ENCODE measurements at regions of chr3 and their contacts with region 1.

Region 1: DNA sequence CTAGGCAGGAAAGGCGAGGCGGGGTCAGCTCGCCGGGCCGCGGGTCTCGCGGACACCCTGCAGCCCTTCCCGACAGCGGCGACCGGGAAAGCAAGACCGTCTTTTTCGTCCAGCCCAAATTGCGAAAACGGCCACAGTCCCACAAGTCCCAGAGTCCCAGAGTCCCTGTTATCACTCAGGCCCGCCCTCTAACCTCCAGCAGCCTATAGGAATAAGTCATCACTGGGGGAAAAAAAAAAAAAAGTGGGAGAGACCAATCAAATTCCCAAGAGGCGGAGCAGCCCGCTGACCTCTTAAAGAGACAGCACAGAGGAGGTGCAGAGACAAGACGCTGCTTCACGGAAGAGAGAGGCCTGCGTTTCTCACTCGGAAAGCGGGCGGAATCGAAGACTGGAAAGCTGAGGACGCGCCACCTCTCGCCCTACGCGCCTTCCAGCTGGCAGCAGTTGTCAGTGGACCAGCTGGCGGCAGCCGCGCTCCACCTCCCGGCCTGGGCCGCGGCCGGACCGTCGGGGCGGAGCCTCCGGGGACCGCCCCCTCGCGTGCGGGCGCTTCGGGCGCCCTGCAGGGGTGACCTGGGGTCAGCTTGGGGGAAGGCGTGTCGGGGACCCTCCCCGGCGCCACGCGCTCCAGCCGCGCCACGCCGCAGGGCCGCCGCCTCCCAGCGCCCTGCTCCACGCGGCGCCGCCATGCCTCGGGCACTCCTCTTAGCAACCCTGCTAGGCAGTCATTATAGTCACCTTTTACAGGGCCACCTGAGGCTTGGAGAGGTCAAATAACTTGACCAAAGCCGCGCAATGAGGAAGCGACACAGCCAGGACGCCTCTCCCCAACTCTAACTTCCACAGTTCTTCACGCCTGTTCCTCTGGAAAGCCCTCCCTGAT is at the start of gene TPRA1:
- DNase-seq: peak; percentile 96 to 98 (median 98)
- H3K4me3 ChIP-seq: peak within 1 kb of the TSS; percentile 71 to 94 (median 85)
- H3K27ac ChIP-seq: peak within 1 kb of the TSS; percentile 85 to 94
- H3K4me1 ChIP-seq: peaks cover 0 to 32% (median 27%) of the 10 kb centered on the region in 4 experiments
- H3K27me3 ChIP-seq: no peaks in the 10 kb centered on the region

Region 2: GRCh38 chr3:127216415-127217261 is 374.2 kb before region 1 on chr3:
- CTCF ChIA-PET with region 1: no interaction called
- POLR2A ChIA-PET with region 1: no interaction called
- DNase-seq: no peak
- H3K4me3 ChIP-seq: no peak overlapping the region
- H3K27ac ChIP-seq: no peak overlapping the region
- H3K4me1 ChIP-seq: peaks cover 0 to 4% (median 0%) of the 10 kb centered on the region in 4 experiments
- H3K27me3 ChIP-seq: peaks cover 0 to 42% (median 10%) of the 10 kb centered on the region in 5 experiments

Region 3: DNA sequence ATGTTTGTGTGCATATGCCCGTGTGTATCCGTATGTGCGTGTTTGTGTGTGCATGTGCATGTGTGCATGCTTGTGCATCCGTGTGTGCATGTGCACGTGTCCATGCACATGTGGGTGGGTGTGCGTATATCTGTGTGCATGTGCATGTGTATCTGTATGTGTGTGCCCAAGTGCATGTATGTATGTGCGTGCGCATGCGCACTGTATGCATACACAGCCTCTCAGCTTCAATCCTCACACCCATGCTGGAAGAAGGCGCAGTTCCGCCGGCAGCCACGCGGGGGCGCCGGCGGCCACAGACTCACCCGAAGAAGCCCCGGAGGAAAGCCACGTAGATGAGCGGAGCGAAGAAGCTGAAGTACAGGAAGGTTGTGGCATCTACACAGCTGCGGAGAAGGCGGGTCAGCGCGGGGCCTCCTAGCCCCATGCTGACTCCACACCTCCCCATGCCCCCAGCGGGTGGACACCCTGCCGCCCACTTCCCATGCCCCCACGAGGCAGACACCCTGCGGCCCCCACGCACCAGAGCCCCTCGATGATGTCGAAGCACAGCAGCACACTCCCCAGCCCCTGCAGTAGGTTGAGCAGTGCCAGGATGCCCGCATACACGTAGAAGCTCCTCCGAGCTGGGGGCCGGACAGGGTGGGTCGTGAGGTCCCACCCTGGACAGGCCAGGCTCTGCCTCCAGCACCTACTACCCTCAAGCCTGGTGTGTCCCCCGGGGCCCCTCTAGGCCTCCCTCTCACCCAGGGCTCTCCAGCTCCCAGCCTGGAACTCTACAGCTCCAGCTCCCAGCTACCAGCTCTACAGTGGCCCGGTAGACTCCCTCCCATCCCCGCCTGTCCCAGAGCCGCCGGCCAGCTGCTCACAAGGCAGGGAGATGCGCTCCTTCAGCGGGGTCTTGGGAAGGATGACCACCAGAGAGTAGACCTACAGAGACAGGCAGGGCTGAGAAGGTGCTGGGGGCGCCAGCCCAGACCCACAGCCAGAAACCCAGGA is 15.7 kb before region 1 on chr3:
- CTCF ChIA-PET with region 1: interaction called, 42 read pairs
- POLR2A ChIA-PET with region 1: no interaction called
- DNase-seq: peak; percentile 85 to 94 (median 91)
- H3K4me3 ChIP-seq: peak overlapping the region in 1 of 7 experiments; percentile 8
- H3K27ac ChIP-seq: no peak overlapping the region
- H3K4me1 ChIP-seq: peaks cover 0 to 9% (median 6%) of the 10 kb centered on the region in 4 experiments
- H3K27me3 ChIP-seq: no peaks in the 10 kb centered on the region

Region 4: GRCh38 chr3:127697551-127698240 is 106.9 kb after region 1 on chr3:
- CTCF ChIA-PET with region 1: no interaction called
- POLR2A ChIA-PET with region 1: no interaction called
- DNase-seq: peak; percentile 55 to 74 (median 73)
- H3K4me3 ChIP-seq: no peak overlapping the region
- H3K27ac ChIP-seq: no peak overlapping the region
- H3K4me1 ChIP-seq: peaks cover 0 to 29% (median 20%) of the 10 kb centered on the region in 4 experiments
- H3K27me3 ChIP-seq: no peaks in the 10 kb centered on the region

Measured in common myeloid progenitor, CD34-positive (primary cell).